ENCODE measurements at regions of chr12 and their contacts with region 1.

Region 1: DNA sequence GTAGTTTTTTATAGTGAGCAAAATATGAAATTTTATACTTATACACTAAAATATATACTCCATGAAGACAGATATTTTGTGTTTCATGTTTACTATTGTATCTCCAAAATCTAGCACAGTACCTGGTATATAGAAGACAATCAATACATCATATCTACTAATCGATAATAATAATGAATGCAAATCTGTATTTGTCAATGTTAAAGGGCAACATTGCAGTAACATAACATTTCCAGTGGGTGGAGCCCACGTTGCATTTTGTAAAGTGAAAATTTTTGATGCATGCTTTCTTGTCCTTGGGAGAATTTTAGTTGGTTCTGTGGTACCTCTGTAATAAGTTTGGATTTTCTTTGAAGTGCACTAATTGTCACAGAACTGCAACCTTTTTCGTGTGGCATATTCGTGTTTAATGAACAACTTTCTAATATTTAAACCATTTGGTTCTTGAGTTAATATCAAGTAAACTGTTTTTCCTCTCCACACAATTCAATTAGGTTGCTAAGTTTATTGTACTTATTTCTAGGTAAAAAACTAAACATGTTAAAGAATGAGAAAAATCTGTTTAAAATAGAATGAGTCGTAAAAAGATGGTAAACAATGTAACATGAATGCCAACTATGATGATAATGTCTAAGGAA is 47.4 kb downstream of the AVPR1A start:
- DNase-seq: peak; percentile 36
- H3K4me3 ChIP-seq: no peak overlapping the region
- H3K27ac ChIP-seq: no peak overlapping the region
- H3K4me1 ChIP-seq: no peaks in the 10 kb centered on the region
- H3K27me3 ChIP-seq: peaks cover 4 to 5% of the 10 kb centered on the region in 2 experiments
- CTCF ChIP-seq: peak; percentile 46 to 51
- POLR2A ChIP-seq: no peak

Region 2: GRCh38 chr12:63144556-63144955 is 40.9 kb after region 1 on chr12:
- CTCF ChIA-PET with region 1: no interaction called
- POLR2A ChIA-PET with region 1: no interaction called
- dilution Hi-C with region 1: no loop called
- intact Hi-C with region 1: no loop called
- DNase-seq: no peak
- H3K4me3 ChIP-seq: no peak overlapping the region
- H3K27ac ChIP-seq: no peak overlapping the region
- H3K4me1 ChIP-seq: no peaks in the 10 kb centered on the region
- H3K27me3 ChIP-seq: peaks cover 3 to 38% of the 10 kb centered on the region in 2 experiments
- CTCF ChIP-seq: no peak
- POLR2A ChIP-seq: no peak

Region 3: GRCh38 chr12:63276537-63277365 is 173.1 kb after region 1 on chr12:
- CTCF ChIA-PET with region 1: no interaction called
- POLR2A ChIA-PET with region 1: no interaction called
- dilution Hi-C with region 1: no loop called
- intact Hi-C with region 1: loop called (anchors 1 kb)
- DNase-seq: peak; percentile 56
- H3K4me3 ChIP-seq: no peak overlapping the region
- H3K27ac ChIP-seq: no peak overlapping the region
- H3K4me1 ChIP-seq: no peaks in the 10 kb centered on the region
- H3K27me3 ChIP-seq: peaks cover 2% of the 10 kb centered on the region in 2 experiments
- CTCF ChIP-seq: peak; percentile 64 to 73
- POLR2A ChIP-seq: no peak

Region 4: DNA sequence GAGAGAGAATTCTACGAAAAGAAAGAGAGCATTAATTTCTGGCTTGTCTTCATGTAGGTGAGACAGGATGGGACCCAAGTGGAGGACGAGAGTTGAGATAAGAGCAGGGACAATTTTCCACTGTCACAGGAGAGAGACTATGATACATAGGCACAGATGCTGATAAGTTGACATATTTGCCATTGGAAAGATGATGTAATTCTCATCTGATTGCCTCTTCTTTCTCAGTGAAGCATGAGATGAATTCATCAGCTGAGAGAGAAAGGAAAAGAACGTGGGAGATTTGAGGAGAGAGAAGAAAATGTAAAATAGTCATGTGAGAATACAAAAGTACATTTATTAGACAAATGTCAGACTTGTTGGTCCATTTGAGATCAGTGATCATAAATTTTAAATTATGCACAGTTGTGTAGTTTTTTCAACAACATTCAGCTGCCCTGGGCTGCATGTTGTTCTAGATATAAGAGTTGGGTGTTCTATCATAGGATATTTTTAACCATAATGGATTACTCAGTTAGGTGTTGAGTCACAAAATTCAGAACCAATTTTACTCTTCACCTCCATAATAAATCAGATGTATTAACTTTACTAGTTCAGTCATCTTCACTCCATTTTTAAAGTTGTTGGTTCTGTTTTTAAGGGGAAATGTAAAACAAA is 341.7 kb after region 1 on chr12:
- CTCF ChIA-PET with region 1: no interaction called
- POLR2A ChIA-PET with region 1: no interaction called
- dilution Hi-C with region 1: no loop called
- intact Hi-C with region 1: no loop called
- DNase-seq: no peak
- H3K4me3 ChIP-seq: no peak overlapping the region
- H3K27ac ChIP-seq: no peak overlapping the region
- H3K4me1 ChIP-seq: no peaks in the 10 kb centered on the region
- H3K27me3 ChIP-seq: peaks cover 0 to 2% of the 10 kb centered on the region in 2 experiments
- CTCF ChIP-seq: no peak
- POLR2A ChIP-seq: no peak

Region 5: GRCh38 chr12:63668028-63668799 is 564.6 kb after region 1 on chr12 and contains the start of gene DPY19L2:
- CTCF ChIA-PET with region 1: no interaction called
- POLR2A ChIA-PET with region 1: no interaction called
- dilution Hi-C with region 1: no loop called
- intact Hi-C with region 1: loop called (anchors 2 kb)
- DNase-seq: peak; percentile 47
- H3K4me3 ChIP-seq: peak within 1 kb of the TSS; percentile 39 to 49 (median 48)
- H3K27ac ChIP-seq: no peak within 1 kb of the TSS
- H3K4me1 ChIP-seq: no peaks in the 10 kb centered on the region
- H3K27me3 ChIP-seq: peaks cover 4 to 8% of the 10 kb centered on the region in 2 experiments
- CTCF ChIP-seq: no peak
- POLR2A ChIP-seq: no peak
- total RNA-seq, gene DPY19L2: 1.6 and 2.3 TPM in 2 replicates

Region 6: GRCh38 chr12:63766498-63766897 is 662.9 kb after region 1 on chr12:
- CTCF ChIA-PET with region 1: no interaction called
- POLR2A ChIA-PET with region 1: no interaction called
- dilution Hi-C with region 1: no loop called
- intact Hi-C with region 1: loop called (anchors 10 kb)
- DNase-seq: no peak
- H3K4me3 ChIP-seq: no peak overlapping the region
- H3K27ac ChIP-seq: no peak overlapping the region
- H3K4me1 ChIP-seq: no peaks in the 10 kb centered on the region
- H3K27me3 ChIP-seq: peaks cover 0 to 8% of the 10 kb centered on the region in 2 experiments
- CTCF ChIP-seq: no peak
- POLR2A ChIP-seq: no peak

Region 7: GRCh38 chr12:63802012-63802608 is 698.5 kb after region 1 on chr12:
- CTCF ChIA-PET with region 1: interaction called, 3 read pairs
- POLR2A ChIA-PET with region 1: no interaction called
- dilution Hi-C with region 1: no loop called
- intact Hi-C with region 1: loop called (anchors 1 kb)
- DNase-seq: peak; percentile 43
- H3K4me3 ChIP-seq: no peak overlapping the region
- H3K27ac ChIP-seq: no peak overlapping the region
- H3K4me1 ChIP-seq: no peaks in the 10 kb centered on the region
- H3K27me3 ChIP-seq: no peaks in the 10 kb centered on the region
- CTCF ChIP-seq: peak; percentile 31
- POLR2A ChIP-seq: no peak

Measured in endothelial cell of umbilical vein (primary cell).